ENCODE measurements at regions of chr2 and their contacts with region 1.

Region 1: DNA sequence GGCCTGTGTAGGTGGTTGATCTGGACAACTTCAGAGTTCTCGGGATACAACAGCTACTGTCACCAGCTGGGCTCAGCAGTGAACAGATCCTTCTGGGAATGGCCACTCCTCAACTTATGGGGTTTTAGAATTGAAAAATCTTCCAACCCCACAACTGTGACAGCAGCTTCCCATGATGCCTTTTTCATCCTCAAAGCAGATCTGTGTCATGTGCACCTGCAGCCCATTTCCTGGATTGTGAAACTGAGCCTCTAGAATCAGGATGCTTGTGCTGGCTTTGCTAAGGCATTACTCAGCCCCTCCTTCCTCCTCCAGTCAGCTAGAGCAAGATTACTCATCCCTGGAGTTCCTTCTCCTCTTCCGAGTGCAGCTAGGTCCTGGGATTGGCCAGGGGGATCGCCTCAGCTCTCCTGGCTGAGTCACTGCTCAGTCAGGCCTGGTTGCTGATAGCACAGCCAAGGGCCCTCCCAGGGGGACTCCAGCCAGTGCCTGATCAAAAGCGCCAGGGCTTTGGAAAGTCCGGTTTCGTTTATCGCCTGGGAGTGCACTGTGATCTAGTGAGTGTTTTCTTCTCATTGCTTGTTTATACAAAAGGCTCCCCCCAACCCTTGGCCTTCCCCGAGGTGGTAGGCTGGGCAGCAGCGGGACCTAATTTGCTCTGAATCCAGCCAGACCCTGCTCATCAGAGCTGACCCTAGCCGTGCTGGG is 2.4 kb upstream of the LPIN1 start:
- DNase-seq: peak; percentile 94 to 99
- H3K4me3 ChIP-seq: peak overlapping the region; percentile 29 to 47
- H3K27ac ChIP-seq: peak overlapping the region; percentile 53 to 64
- H3K4me1 ChIP-seq: peaks cover 4 to 30% of the 10 kb centered on the region in 2 donors
- H3K27me3 ChIP-seq: no peaks in the 10 kb centered on the region
- CTCF ChIP-seq: peak in 1 of 3 experiments; percentile 3

Region 2: GRCh38 chr2:11154923-11155380 is 589.0 kb before region 1 on chr2:
- intact Hi-C with region 1: loop called (anchors 10 kb)
- DNase-seq: peak; percentile 88 to 98
- H3K4me3 ChIP-seq: peak overlapping the region; percentile 71 to 85
- H3K27ac ChIP-seq: peak overlapping the region; percentile 96
- H3K4me1 ChIP-seq: peaks cover 4 to 18% of the 10 kb centered on the region in 2 donors
- H3K27me3 ChIP-seq: no peaks in the 10 kb centered on the region
- CTCF ChIP-seq: no peak

Region 3: DNA sequence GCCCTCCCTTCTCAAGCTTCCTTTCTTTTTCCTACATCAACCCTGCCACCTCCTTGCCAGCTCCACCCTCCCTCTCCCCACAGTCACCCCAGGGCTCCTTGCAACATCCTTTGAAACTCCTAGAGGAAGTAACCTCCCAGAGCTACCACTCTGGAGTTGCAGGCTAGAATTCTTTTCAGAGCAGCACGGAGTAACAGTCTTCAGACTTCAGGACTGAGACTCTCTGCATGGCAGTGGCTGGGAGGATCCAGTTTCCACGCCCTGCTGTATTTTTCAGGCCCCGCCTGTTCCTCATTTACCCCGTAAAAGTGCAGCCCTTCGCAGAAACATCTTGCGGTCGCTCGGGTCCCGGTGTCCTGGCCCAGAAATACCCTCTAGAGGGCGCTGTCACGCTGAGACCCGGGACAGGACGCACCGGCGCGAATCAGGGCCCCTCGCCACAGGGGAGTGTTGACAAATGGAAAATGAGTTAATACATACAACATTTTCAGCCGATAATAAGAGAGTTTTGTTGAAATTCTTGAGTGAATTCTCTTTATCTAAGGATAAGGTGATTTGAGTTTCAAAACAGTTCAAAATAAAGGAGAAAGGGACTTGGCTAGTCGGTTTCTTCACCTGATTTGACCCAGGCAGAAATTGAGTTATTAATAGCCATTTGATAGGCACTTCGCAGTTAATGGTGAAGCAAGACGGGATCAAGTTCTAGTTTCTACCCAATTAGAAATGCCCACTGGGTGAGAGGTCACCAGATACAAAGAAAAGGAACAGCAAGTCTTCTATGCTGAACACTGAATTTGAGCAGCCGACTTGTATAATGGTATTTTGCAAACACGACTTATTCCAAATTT is 55.6 kb before region 1 on chr2:
- intact Hi-C with region 1: loop called (anchors 2 kb)
- DNase-seq: peak; percentile 46 to 91
- H3K4me3 ChIP-seq: peak overlapping the region; percentile 32 to 47
- H3K27ac ChIP-seq: peak overlapping the region; percentile 57 to 70
- H3K4me1 ChIP-seq: peaks cover 0 to 17% of the 10 kb centered on the region in 2 donors
- H3K27me3 ChIP-seq: no peaks in the 10 kb centered on the region
- CTCF ChIP-seq: peak; percentile 74 to 95 (median 76)

Region 4: DNA sequence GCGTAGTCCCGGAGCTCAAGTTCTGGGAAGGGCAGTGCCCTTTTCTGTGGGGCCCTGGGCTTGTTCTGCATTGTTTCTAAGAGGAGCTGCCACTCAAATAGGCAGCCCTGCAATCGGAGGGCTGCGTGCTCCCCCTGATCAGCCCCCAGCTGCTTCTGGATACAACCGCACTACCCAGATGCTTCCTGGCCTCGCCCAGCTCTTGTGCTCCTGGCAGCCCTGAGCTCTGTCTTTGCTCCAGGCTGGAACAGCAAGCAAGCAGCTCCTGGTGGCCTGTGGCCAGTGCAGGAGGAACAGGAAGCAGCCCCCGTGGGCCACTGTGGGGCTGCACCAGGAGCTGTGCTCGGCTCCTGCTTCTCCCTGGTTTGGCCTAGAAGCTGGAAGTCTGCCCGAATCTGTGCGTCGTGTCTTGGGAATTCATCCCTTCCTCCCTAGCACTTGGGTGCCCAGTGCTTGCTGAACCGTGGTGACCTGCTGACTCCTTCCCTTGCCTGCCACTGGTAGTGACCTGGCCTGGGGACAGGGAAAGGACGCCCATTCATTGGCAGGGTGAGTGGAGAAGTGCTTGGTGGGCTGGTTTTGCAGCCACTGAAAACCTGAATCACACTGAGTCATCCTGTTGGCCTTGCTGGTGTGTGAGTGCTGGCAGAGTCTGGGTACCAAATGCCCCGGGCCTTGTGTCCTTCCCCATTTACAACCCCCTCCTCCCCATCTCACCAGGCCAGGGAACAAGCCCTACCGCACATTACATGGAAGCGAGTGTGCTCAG is 46.7 kb before region 1 on chr2:
- intact Hi-C with region 1: loop called (anchors 2 kb)
- DNase-seq: peak; percentile 68 to 84
- H3K4me3 ChIP-seq: peak overlapping the region in 1 of 2 donors; percentile 38
- H3K27ac ChIP-seq: peak overlapping the region; percentile 65 to 77
- H3K4me1 ChIP-seq: peaks cover 12 to 20% of the 10 kb centered on the region in 2 donors
- H3K27me3 ChIP-seq: no peaks in the 10 kb centered on the region
- CTCF ChIP-seq: no peak

Region 5: DNA sequence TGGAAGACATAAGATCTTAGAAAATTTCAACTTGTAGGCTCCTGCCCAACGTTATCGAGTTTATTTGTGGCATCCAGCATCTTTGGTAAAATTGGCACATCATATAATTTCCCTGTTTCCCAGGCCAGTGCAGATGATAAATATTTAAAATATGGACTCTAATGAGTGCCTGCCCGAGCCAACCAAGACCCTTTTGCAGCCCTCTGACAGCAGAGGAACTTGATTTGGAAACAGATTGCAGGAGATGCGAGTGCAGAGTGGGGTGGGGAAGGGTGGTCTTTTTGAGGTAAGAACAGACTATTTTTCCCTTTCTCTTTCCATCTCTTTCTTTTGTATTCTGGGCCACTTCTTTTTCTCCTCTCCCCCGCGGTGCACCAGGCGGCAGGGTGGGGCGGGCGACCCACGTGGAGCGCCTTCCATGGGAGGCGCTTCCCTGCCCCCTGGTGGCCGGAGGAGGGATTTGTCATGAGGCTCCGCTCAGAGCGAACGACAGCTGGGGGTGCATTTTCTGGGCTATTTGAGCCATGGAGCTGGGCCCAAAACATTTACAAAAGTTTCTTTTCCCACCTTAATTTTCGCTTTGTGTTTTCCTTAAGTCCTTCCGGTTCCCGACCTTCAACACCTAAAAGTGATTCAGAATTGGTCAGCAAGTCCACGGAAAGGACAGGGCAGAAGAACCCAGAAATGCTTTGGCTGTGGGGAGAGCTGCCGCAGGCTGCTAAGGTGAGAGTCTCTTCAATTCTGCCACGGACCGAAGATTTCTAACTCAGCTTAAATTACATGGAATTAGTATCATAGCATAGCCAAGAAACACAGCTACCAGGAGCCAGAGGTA is 35.1 kb after region 1 on chr2:
- intact Hi-C with region 1: loop called (anchors 2 kb)
- DNase-seq: peak in 1 of 2 donors; percentile 79
- H3K4me3 ChIP-seq: no peak overlapping the region
- H3K27ac ChIP-seq: no peak overlapping the region
- H3K4me1 ChIP-seq: peaks cover 3 to 4% of the 10 kb centered on the region in 2 donors
- H3K27me3 ChIP-seq: no peaks in the 10 kb centered on the region
- CTCF ChIP-seq: peak; percentile 94 to 99 (median 94)